ENCODE measurements at regions of chr1 and their contacts with region 1.

Region 1: GRCh38 chr1:40338745-40339424 is 21.8 kb upstream of the COL9A2 start:
- DNase-seq: peak; percentile 74
- ATAC-seq: peak; percentile 97
- H3K4me3 ChIP-seq: no peak overlapping the region
- H3K27ac ChIP-seq: no peak overlapping the region
- H3K4me1 ChIP-seq: peaks cover 0 to 4% of the 10 kb centered on the region in 2 experiments; a peak in 1 of 4 replicates
- H3K27me3 ChIP-seq: no peaks in the 10 kb centered on the region
- CTCF ChIP-seq: peak; percentile 93 to 99 (median 98)
- POLR2A ChIP-seq: no peak
- RAD21 ChIP-seq: peak; percentile 99

Region 2: GRCh38 chr1:39919545-39919944 is 419.3 kb before region 1 on chr1:
- CTCF ChIA-PET with region 1: interaction called, 14 read pairs
- POLR2A ChIA-PET with region 1: no interaction called
- RAD21 ChIA-PET with region 1: interaction called in 1 of 2 experiments, 3 read pairs
- intact Hi-C with region 1: no loop called
- DNase-seq: peak; percentile 68
- ATAC-seq: peak; percentile 99
- H3K4me3 ChIP-seq: no peak overlapping the region
- H3K27ac ChIP-seq: no peak overlapping the region
- H3K4me1 ChIP-seq: peaks cover 0 to 5% of the 10 kb centered on the region in 2 experiments; a peak in 1 of 4 replicates
- H3K27me3 ChIP-seq: no peaks in the 10 kb centered on the region
- CTCF ChIP-seq: peak; percentile 66 to 91 (median 71)
- POLR2A ChIP-seq: no peak
- RAD21 ChIP-seq: peak; percentile 94

Region 3: GRCh38 chr1:40143891-40144575 is 194.9 kb before region 1 on chr1:
- CTCF ChIA-PET with region 1: interaction called, 82 read pairs
- POLR2A ChIA-PET with region 1: interaction called, 5 read pairs
- RAD21 ChIA-PET with region 1: interaction called, 14 to 15 read pairs
- intact Hi-C with region 1: loop called (anchors 2 kb)
- DNase-seq: peak; percentile 78
- ATAC-seq: peak; percentile 99
- H3K4me3 ChIP-seq: no peak overlapping the region
- H3K27ac ChIP-seq: no peak overlapping the region
- H3K4me1 ChIP-seq: peaks cover 4 to 18% of the 10 kb centered on the region in 2 experiments; a peak in 3 of 4 replicates
- H3K27me3 ChIP-seq: no peaks in the 10 kb centered on the region
- CTCF ChIP-seq: peak; percentile 82 to 90 (median 90)
- POLR2A ChIP-seq: no peak
- RAD21 ChIP-seq: peak; percentile 93

Region 4: GRCh38 chr1:40315239-40315794 is 23.6 kb before region 1 on chr1:
- CTCF ChIA-PET with region 1: interaction called, 10 read pairs
- POLR2A ChIA-PET with region 1: no interaction called
- RAD21 ChIA-PET with region 1: interaction called in 1 of 2 experiments, 3 read pairs
- intact Hi-C with region 1: no loop called
- DNase-seq: peak; percentile 73
- ATAC-seq: peak; percentile 75
- H3K4me3 ChIP-seq: peak overlapping the region; percentile 47 to 54
- H3K27ac ChIP-seq: peak overlapping the region; percentile 35; the same call in 1 of the 2 replicates
- H3K4me1 ChIP-seq: peaks cover 6 to 36% of the 10 kb centered on the region in 2 experiments; a peak in 3 of 4 replicates
- H3K27me3 ChIP-seq: no peaks in the 10 kb centered on the region
- CTCF ChIP-seq: peak; percentile 68 to 93 (median 80); a peak in 5 of 6 replicates
- POLR2A ChIP-seq: no peak
- RAD21 ChIP-seq: peak; percentile 75

Region 5: DNA sequence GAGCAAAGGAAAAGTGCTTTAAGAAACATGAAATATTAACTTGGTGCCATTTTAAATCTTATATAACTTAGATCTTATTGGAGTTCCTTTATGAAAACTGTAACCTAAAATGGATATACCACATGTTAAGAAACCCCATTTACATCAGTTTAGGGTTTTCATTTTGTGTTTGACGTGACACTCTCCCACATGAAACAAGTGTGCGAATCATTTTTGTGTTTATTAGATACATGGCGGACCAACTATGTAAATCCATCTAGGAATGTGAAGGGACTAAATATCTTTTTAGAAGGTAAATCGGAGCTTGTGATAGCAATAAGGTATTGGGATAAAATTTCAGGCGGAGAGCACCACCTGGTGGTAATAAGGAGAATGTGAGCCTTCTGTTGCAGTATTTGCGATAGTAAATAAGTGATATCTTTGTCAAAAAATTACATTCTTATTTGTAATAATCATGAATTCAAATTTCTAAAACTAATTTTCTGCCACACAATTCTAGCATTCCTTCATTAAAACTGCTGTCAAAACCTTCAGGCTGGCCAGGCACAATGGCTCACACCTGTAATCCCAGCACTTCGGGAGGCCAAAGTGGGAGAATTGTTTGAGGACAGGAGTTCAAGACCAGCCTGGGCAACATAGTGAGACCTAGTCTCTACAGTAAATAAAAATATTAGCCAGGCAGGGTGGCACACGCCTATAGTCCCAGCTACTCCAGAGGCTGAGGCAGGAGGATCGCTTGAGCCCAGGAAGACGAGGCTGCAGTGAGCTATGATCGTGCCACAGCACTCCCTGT is 66.0 kb after region 1 on chr1:
- CTCF ChIA-PET with region 1: interaction called, 21 read pairs
- POLR2A ChIA-PET with region 1: no interaction called
- RAD21 ChIA-PET with region 1: no interaction called
- intact Hi-C with region 1: loop called (anchors 5 kb)
- DNase-seq: peak; percentile 51
- ATAC-seq: peak; percentile 79
- H3K4me3 ChIP-seq: no peak overlapping the region
- H3K27ac ChIP-seq: no peak overlapping the region
- H3K4me1 ChIP-seq: no peaks in the 10 kb centered on the region
- H3K27me3 ChIP-seq: no peaks in the 10 kb centered on the region
- CTCF ChIP-seq: peak; percentile 72 to 86 (median 79)
- POLR2A ChIP-seq: no peak
- RAD21 ChIP-seq: peak; percentile 85